CD14-positive monocyte (primary cell): ENCODE measurements at regions of chr16 and their contacts with region 1.

Region 1: GRCh38 chr16:9053006-9053601 is 38.3 kb upstream of the HAPSTR1 start:
- DNase-seq: peak; percentile 21 to 70 (median 36)
- H3K4me3 ChIP-seq: no peak overlapping the region
- H3K4me3 Mint-ChIP-seq: no peak overlapping the region
- H3K27ac ChIP-seq: no peak overlapping the region
- H3K27ac Mint-ChIP-seq: peak overlapping the region in 1 of 7 donors; percentile 18
- H3K4me1 ChIP-seq: peaks cover 3 to 4% of the 10 kb centered on the region in 2 donors
- H3K4me1 Mint-ChIP-seq: peaks cover 7% of the 10 kb centered on the region
- H3K27me3 ChIP-seq: no peaks in the 10 kb centered on the region
- H3K27me3 Mint-ChIP-seq: peaks cover 6 to 30% (median 12%) of the 10 kb centered on the region in 3 donors
- CTCF ChIP-seq: no peak

Region 2: GRCh38 chr16:8310323-8310722 is 742.8 kb before region 1 on chr16:
- intact Hi-C with region 1: no loop called
- DNase-seq: no peak
- H3K4me3 ChIP-seq: no peak overlapping the region
- H3K4me3 Mint-ChIP-seq: no peak overlapping the region
- H3K27ac ChIP-seq: no peak overlapping the region
- H3K27ac Mint-ChIP-seq: no peak overlapping the region
- H3K4me1 ChIP-seq: no peaks in the 10 kb centered on the region
- H3K4me1 Mint-ChIP-seq: no peaks in the 10 kb centered on the region
- H3K27me3 ChIP-seq: no peaks in the 10 kb centered on the region
- H3K27me3 Mint-ChIP-seq: no peaks in the 10 kb centered on the region
- CTCF ChIP-seq: no peak

Region 3: GRCh38 chr16:8832717-8833105 is 220.4 kb before region 1 on chr16:
- intact Hi-C with region 1: no loop called
- DNase-seq: no peak
- H3K4me3 ChIP-seq: no peak overlapping the region
- H3K4me3 Mint-ChIP-seq: no peak overlapping the region
- H3K27ac ChIP-seq: no peak overlapping the region
- H3K27ac Mint-ChIP-seq: peak overlapping the region in 2 of 7 donors; percentile 68 to 92
- H3K4me1 ChIP-seq: peaks cover 5% of the 10 kb centered on the region in 2 donors
- H3K4me1 Mint-ChIP-seq: peaks cover 15% of the 10 kb centered on the region
- H3K27me3 ChIP-seq: no peaks in the 10 kb centered on the region
- H3K27me3 Mint-ChIP-seq: peaks cover 0 to 4% (median 3%) of the 10 kb centered on the region in 3 donors
- CTCF ChIP-seq: no peak

Region 4: GRCh38 chr16:9090960-9091866 is 38.1 kb after region 1 on chr16 and contains the start of gene HAPSTR1:
- intact Hi-C with region 1: loop called in 1 of 2 experiments (anchors 5 kb)
- DNase-seq: peak; percentile 100
- H3K4me3 ChIP-seq: peak within 1 kb of the TSS; percentile 76 to 100 (median 98)
- H3K4me3 Mint-ChIP-seq: peak within 1 kb of the TSS; percentile 99
- H3K27ac ChIP-seq: peak within 1 kb of the TSS; percentile 91 to 93
- H3K27ac Mint-ChIP-seq: peak within 1 kb of the TSS; percentile 93 to 99 (median 97)
- H3K4me1 ChIP-seq: peaks cover 36 to 44% of the 10 kb centered on the region in 2 donors
- H3K4me1 Mint-ChIP-seq: peaks cover 23% of the 10 kb centered on the region
- H3K27me3 ChIP-seq: no peaks in the 10 kb centered on the region
- H3K27me3 Mint-ChIP-seq: peaks cover 0 to 4% (median 2%) of the 10 kb centered on the region in 3 donors
- CTCF ChIP-seq: no peak
- polyA plus RNA-seq, gene HAPSTR1: 7.2 to 58.9 (median 11.1) TPM

Region 5: GRCh38 chr16:9102379-9102778 is 49.3 kb after region 1 on chr16:
- intact Hi-C with region 1: no loop called
- DNase-seq: peak; percentile 71 to 86 (median 80)
- H3K4me3 ChIP-seq: no peak overlapping the region
- H3K4me3 Mint-ChIP-seq: no peak overlapping the region
- H3K27ac ChIP-seq: peak overlapping the region in 1 of 2 donors; percentile 91
- H3K27ac Mint-ChIP-seq: peak overlapping the region; percentile 75 to 94 (median 87)
- H3K4me1 ChIP-seq: peaks cover 62 to 68% of the 10 kb centered on the region in 2 donors
- H3K4me1 Mint-ChIP-seq: peaks cover 82% of the 10 kb centered on the region
- H3K27me3 ChIP-seq: no peaks in the 10 kb centered on the region
- H3K27me3 Mint-ChIP-seq: peaks cover 0 to 2% (median 0%) of the 10 kb centered on the region in 3 donors
- CTCF ChIP-seq: no peak

Region 6: DNA sequence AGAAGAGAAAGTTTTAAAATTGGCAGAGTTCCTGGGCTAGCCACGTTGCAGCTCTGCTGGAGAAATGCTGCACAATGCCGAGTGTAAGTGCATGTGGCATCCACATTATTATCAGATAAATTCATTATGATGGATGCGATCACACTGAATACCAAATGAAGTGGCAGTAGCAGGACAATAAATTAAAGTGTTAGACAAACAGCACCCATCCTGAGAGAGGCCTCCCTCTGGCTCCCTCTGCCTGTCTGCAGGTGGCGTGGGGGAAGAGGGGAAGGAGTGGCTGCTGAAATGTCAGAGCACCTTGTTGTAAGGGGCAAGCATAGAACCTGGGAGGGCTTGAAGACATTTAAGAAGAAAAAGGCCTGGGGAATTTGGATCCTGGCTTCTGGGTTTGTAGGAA is 362.4 kb after region 1 on chr16:
- intact Hi-C with region 1: no loop called
- DNase-seq: no peak
- H3K4me3 ChIP-seq: no peak overlapping the region
- H3K4me3 Mint-ChIP-seq: no peak overlapping the region
- H3K27ac ChIP-seq: no peak overlapping the region
- H3K27ac Mint-ChIP-seq: no peak overlapping the region
- H3K4me1 ChIP-seq: no peaks in the 10 kb centered on the region
- H3K4me1 Mint-ChIP-seq: no peaks in the 10 kb centered on the region
- H3K27me3 ChIP-seq: no peaks in the 10 kb centered on the region
- H3K27me3 Mint-ChIP-seq: no peaks in the 10 kb centered on the region
- CTCF ChIP-seq: no peak